Mammary epithelial cell (primary cell): ENCODE measurements at regions of chr12 and their contacts with region 1.

Region 1: DNA sequence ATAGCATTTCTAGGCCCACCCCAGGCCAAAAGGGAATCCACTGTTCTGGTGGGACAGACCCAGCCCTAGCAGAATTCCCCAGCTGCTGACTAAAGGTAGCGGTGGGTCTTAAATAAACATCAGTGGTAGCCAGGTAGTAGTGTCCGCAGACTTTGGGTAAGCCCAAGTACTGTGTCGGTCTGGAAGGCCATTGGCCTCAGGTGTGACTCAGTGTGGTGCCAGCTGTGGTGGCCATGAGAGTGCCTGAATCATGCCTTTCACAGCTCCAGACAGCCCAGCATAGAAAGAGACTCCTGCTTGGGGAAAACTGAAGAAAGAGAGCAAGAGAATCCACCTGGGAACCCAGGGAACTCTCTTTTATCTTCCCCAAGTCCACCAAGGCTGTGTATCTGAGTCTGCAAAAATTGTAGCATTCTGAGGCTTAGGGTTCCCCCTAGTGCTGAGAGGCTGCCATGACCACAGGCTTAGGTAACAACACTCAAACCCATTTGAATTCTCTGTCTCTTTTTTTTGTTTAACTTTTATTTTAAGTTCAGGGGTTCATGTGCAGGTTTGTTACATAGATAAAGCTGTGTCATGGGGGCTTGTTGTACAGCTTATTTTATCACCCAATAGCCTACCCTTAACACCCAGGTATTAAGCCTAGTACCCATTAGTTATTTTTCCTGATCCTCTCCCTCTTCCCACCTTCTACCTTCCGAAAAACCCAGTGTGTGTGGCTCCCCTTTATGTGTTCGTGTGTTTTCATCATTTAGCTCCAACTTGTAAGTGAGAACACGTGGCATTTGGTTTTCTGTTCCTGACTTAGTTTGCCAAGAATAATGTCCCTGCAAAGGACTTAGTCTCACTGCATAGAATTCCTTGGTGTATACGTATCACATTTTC is 16.7 kb upstream of the CD163L1 start:
- DNase-seq: peak; percentile 33
- H3K4me3 ChIP-seq: no peak overlapping the region
- H3K27ac ChIP-seq: no peak overlapping the region
- H3K4me1 ChIP-seq: no peaks in the 10 kb centered on the region
- H3K27me3 ChIP-seq: no peaks in the 10 kb centered on the region
- CTCF ChIP-seq: peak; percentile 72 to 87

Region 2: GRCh38 chr12:7219599-7220243 is 240.9 kb before region 1 on chr12:
- CTCF ChIA-PET with region 1: interaction called, 4 read pairs
- dilution Hi-C with region 1: no loop called
- in situ Hi-C with region 1: loop called (anchors 5 kb)
- intact Hi-C with region 1: loop called (anchors 1 kb)
- DNase-seq: peak; percentile 56
- H3K4me3 ChIP-seq: no peak overlapping the region
- H3K27ac ChIP-seq: no peak overlapping the region
- H3K4me1 ChIP-seq: peaks cover 3% of the 10 kb centered on the region
- H3K27me3 ChIP-seq: peaks cover 9% of the 10 kb centered on the region
- CTCF ChIP-seq: peak; percentile 87 to 94

Region 3: DNA sequence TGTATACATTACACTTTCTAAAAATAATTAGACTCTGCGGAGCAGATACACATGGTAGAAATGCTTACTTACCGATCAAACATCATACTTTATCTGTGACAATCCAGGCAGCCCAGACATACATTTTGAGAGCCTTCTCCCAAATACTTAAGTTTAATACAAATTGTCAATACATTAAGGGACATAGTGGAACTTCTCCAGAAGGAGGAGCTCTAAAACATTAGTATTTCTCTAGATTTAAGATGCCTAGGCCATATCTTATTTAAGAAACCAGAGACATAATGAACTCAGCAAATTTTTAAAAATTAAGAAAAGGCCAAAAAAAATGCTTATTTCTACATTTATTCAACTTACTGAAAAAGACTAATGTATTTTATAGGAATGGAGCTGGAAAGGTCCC is 140.7 kb before region 1 on chr12:
- CTCF ChIA-PET with region 1: no interaction called
- dilution Hi-C with region 1: no loop called
- in situ Hi-C with region 1: no loop called
- intact Hi-C with region 1: loop called (anchors 2 kb)
- DNase-seq: no peak
- H3K4me3 ChIP-seq: no peak overlapping the region
- H3K27ac ChIP-seq: no peak overlapping the region
- H3K4me1 ChIP-seq: no peaks in the 10 kb centered on the region
- H3K27me3 ChIP-seq: peaks cover 4% of the 10 kb centered on the region
- CTCF ChIP-seq: peak in 1 of 2 donors; percentile 1

Region 4: GRCh38 chr12:7374423-7375144 is 86.0 kb before region 1 on chr12:
- CTCF ChIA-PET with region 1: no interaction called
- dilution Hi-C with region 1: no loop called
- in situ Hi-C with region 1: no loop called
- intact Hi-C with region 1: loop called (anchors 1 kb)
- DNase-seq: peak; percentile 9
- H3K4me3 ChIP-seq: no peak overlapping the region
- H3K27ac ChIP-seq: no peak overlapping the region
- H3K4me1 ChIP-seq: peaks cover 1% of the 10 kb centered on the region
- H3K27me3 ChIP-seq: no peaks in the 10 kb centered on the region
- CTCF ChIP-seq: peak; percentile 28 to 34